PC-3 (cell line): ENCODE measurements at regions of chr21 and their contacts with region 1.

Region 1: GRCh38 chr21:36319765-36320420 is at the start of gene MORC3:
- DNase-seq: peak; percentile 100
- ATAC-seq: peak; percentile 89
- H3K4me3 ChIP-seq: peak within 1 kb of the TSS; percentile 90
- H3K27ac ChIP-seq: peak within 1 kb of the TSS; percentile 77
- H3K4me1 ChIP-seq: peaks cover 20% of the 10 kb centered on the region
- H3K27me3 ChIP-seq: no peaks in the 10 kb centered on the region
- CTCF ChIP-seq: no peak
- total RNA-seq, gene MORC3: 17.9 and 23.0 TPM in 2 replicates

Region 2: GRCh38 chr21:35664683-35665082 is 655.2 kb before region 1 on chr21:
- CTCF ChIA-PET with region 1: no interaction called
- POLR2A ChIA-PET with region 1: interaction called, 14 read pairs
- intact Hi-C with region 1: no loop called
- DNase-seq: peak; percentile 94
- ATAC-seq: peak; percentile 98
- H3K4me3 ChIP-seq: no peak overlapping the region
- H3K27ac ChIP-seq: peak overlapping the region; percentile 82
- H3K4me1 ChIP-seq: peaks cover 28% of the 10 kb centered on the region
- H3K27me3 ChIP-seq: no peaks in the 10 kb centered on the region
- CTCF ChIP-seq: no peak

Region 3: GRCh38 chr21:36141513-36141925 is 178.4 kb before region 1 on chr21:
- CTCF ChIA-PET with region 1: interaction called, 3 read pairs
- POLR2A ChIA-PET with region 1: no interaction called
- intact Hi-C with region 1: loop called (anchors 1 kb)
- DNase-seq: peak; percentile 100
- ATAC-seq: peak; percentile 99
- H3K4me3 ChIP-seq: no peak overlapping the region
- H3K27ac ChIP-seq: peak overlapping the region; percentile 84
- H3K4me1 ChIP-seq: peaks cover 19% of the 10 kb centered on the region
- H3K27me3 ChIP-seq: no peaks in the 10 kb centered on the region
- CTCF ChIP-seq: peak; percentile 96

Region 4: GRCh38 chr21:36209626-36210171 is 110.2 kb before region 1 on chr21:
- CTCF ChIA-PET with region 1: interaction called, 3 read pairs
- POLR2A ChIA-PET with region 1: interaction called, 7 read pairs
- intact Hi-C with region 1: loop called (anchors 2 kb)
- DNase-seq: peak; percentile 83
- ATAC-seq: peak; percentile 37
- H3K4me3 ChIP-seq: peak overlapping the region; percentile 31; the same call in 1 of the 2 replicates
- H3K27ac ChIP-seq: peak overlapping the region; percentile 83
- H3K4me1 ChIP-seq: peaks cover 67% of the 10 kb centered on the region
- H3K27me3 ChIP-seq: no peaks in the 10 kb centered on the region
- CTCF ChIP-seq: peak; percentile 94

Region 5: DNA sequence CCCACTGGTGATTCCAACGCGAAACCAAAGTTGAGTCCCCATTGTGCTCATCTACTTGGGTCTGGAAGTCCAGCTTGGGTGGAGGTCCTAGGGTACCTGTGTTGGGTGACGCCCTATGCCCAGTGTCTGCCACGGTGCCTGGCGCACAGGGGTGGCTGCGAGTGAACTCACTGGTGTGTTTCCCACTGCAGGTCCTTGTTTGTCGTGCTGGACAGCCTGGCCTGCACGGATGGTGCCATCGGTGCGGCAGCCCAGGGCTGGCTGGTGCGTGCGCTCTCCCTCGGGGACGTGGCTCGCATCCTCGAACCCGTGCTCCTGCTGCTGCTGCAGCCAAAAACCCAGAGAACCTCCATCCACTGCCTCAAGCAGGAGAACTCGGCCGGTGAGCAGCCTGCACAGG is 80.3 kb before region 1 on chr21:
- CTCF ChIA-PET with region 1: no interaction called
- POLR2A ChIA-PET with region 1: no interaction called
- intact Hi-C with region 1: no loop called
- DNase-seq: no peak
- ATAC-seq: no peak
- H3K4me3 ChIP-seq: no peak overlapping the region
- H3K27ac ChIP-seq: no peak overlapping the region
- H3K4me1 ChIP-seq: 0 out of 2 replicates have a peak, but pooled peaks cover 3% of the 10 kb centered on the region
- H3K27me3 ChIP-seq: no peaks in the 10 kb centered on the region
- CTCF ChIP-seq: no peak

Region 6: DNA sequence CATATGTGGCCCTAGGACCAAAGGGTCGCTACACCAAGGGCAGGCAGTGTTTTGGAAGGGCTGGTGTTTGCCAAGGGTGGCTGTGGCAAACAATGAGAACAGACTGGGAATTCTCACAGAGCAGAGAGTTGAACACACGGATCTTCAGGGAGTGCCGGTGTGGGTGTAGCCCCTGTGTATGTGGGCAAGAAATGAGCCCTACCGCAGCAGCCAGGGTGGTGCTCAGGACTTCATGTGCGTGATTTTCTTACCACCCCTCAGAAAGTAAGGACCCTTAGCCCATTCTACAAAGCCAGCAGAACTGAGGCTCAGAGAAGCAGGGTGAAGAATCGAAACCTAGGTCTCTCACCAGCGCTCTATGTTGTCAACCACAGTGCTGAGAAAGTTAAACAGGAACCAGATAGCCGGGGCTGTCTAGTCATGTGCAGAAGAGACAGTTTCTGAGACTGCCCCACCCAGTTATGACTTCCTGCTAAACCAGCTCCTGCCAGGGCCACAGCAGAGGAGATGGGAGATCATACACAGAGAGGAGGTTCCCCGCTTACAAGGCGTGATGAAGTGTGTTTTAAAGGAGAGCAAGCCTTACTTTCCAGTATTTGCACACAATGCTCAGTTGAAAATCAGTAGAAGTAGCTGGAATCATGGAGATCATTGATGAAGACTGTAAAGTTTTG is 21.8 kb before region 1 on chr21:
- CTCF ChIA-PET with region 1: no interaction called
- POLR2A ChIA-PET with region 1: interaction called, 7 read pairs
- intact Hi-C with region 1: loop called (anchors 2 kb)
- DNase-seq: peak; percentile 74
- ATAC-seq: peak; percentile 98
- H3K4me3 ChIP-seq: peak overlapping the region; percentile 54
- H3K27ac ChIP-seq: peak overlapping the region; percentile 57
- H3K4me1 ChIP-seq: peaks cover 12% of the 10 kb centered on the region
- H3K27me3 ChIP-seq: no peaks in the 10 kb centered on the region
- CTCF ChIP-seq: no peak